ENCODE measurements at regions of chr2 and their contacts with region 1.

Region 1: GRCh38 chr2:216687646-216688045 is 7.7 kb downstream of the IGFBP5 start:
- DNase-seq: no peak
- H3K4me3 ChIP-seq: no peak overlapping the region
- H3K27ac ChIP-seq: peak overlapping the region in 4 of 5 donors; percentile 35 to 90 (median 81)
- H3K4me1 ChIP-seq: peaks cover 53 to 100% (median 81%) of the 10 kb centered on the region in 4 donors
- H3K27me3 ChIP-seq: peaks cover 0 to 31% (median 6%) of the 10 kb centered on the region in 3 donors
- CTCF ChIP-seq: peak in 1 of 7 experiments; percentile 14
- EP300 ChIP-seq: no peak
- POLR2A ChIP-seq: no peak

Region 2: DNA sequence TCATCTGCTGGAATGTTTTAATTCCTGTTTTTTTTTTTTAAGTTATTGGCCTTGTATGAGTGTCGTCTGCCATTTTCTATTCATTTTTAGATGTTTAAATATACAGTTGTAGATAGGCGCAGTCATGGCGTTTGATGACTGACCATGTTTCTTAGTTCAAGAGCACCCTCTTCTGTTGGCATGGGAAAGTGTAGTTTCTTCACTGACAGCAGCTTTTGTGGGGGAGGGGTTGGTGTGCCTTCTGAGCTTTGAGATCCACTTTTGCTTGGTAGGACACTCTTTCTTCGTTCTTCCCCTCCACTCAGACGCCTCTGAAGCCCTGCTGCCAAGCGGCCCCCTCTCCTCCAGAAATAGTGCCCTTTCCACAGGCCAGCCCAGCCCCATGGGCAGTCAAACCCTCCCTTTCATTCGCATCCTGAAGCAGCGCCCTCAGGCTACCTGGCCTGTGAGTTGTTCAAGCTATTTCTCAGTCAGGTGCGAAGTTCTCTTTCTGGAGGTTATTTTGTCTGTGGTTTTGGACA is 823.2 kb after region 1 on chr2:
- intact Hi-C with region 1: loop called (anchors 10 kb)
- DNase-seq: peak; percentile 52 to 94
- H3K4me3 ChIP-seq: no peak overlapping the region
- H3K27ac ChIP-seq: peak overlapping the region in 1 of 5 donors; percentile 26
- H3K4me1 ChIP-seq: peaks cover 0 to 19% (median 3%) of the 10 kb centered on the region in 4 donors
- H3K27me3 ChIP-seq: no peaks in the 10 kb centered on the region
- CTCF ChIP-seq: peak in 5 of 7 experiments; percentile 27 to 89 (median 57)
- EP300 ChIP-seq: no peak
- POLR2A ChIP-seq: no peak

Region 3: GRCh38 chr2:217713395-217714286 is 1026.0 kb after region 1 on chr2:
- intact Hi-C with region 1: loop called (anchors 10 kb)
- DNase-seq: peak; percentile 78 to 90
- H3K4me3 ChIP-seq: no peak overlapping the region
- H3K27ac ChIP-seq: peak overlapping the region in 4 of 5 donors; percentile 56 to 78 (median 58)
- H3K4me1 ChIP-seq: peaks cover 10 to 31% (median 21%) of the 10 kb centered on the region in 4 donors
- H3K27me3 ChIP-seq: no peaks in the 10 kb centered on the region
- CTCF ChIP-seq: peak in 5 of 7 experiments; percentile 64 to 97 (median 92)
- EP300 ChIP-seq: no peak
- POLR2A ChIP-seq: no peak